ENCODE measurements at regions of chr3 and their contacts with region 1.

Region 1: GRCh38 chr3:111967651-111968274 is 11.1 kb upstream of the ABHD10 start:
- DNase-seq: peak; percentile 97
- H3K4me3 ChIP-seq: no peak overlapping the region
- H3K27ac ChIP-seq: peak overlapping the region; percentile 38 to 67 (median 48)
- H3K4me1 ChIP-seq: peaks cover 18 to 28% (median 25%) of the 10 kb centered on the region in 4 donors
- H3K27me3 ChIP-seq: no peaks in the 10 kb centered on the region
- CTCF ChIP-seq: peak; percentile 85 to 94 (median 90)
- EP300 ChIP-seq: no peak
- POLR2A ChIP-seq: no peak

Region 2: GRCh38 chr3:111717601-111718000 is 250.2 kb before region 1 on chr3:
- intact Hi-C with region 1: loop called (anchors 1 kb)
- DNase-seq: peak; percentile 93
- H3K4me3 ChIP-seq: no peak overlapping the region
- H3K27ac ChIP-seq: peak overlapping the region in 1 of 4 donors; percentile 37
- H3K4me1 ChIP-seq: peaks cover 3 to 31% (median 25%) of the 10 kb centered on the region in 4 donors
- H3K27me3 ChIP-seq: no peaks in the 10 kb centered on the region
- CTCF ChIP-seq: peak; percentile 94 to 96 (median 96)
- EP300 ChIP-seq: no peak
- POLR2A ChIP-seq: no peak

Measured in esophagus muscularis mucosa (tissue), 4 donors.